Activated CD4-positive, alpha-beta T cell treated with anti-CD3 and anti-CD28 coated beads, Interleukin-2, amount 10 ng/mL, durations not matched to agents 24 days and 14 days (primary cell): ENCODE measurements at regions of chr6 and their contacts with region 1.

Region 1: GRCh38 chr6:683742-684440 is 9.0 kb downstream of the EXOC2 start:
- DNase-seq: peak; percentile 66
- H3K4me3 Mint-ChIP-seq: peak overlapping the region; percentile 71
- H3K27ac Mint-ChIP-seq: peak overlapping the region; percentile 77
- H3K4me1 Mint-ChIP-seq: peaks cover 41% of the 10 kb centered on the region
- H3K27me3 Mint-ChIP-seq: no peaks in the 10 kb centered on the region

Region 2: DNA sequence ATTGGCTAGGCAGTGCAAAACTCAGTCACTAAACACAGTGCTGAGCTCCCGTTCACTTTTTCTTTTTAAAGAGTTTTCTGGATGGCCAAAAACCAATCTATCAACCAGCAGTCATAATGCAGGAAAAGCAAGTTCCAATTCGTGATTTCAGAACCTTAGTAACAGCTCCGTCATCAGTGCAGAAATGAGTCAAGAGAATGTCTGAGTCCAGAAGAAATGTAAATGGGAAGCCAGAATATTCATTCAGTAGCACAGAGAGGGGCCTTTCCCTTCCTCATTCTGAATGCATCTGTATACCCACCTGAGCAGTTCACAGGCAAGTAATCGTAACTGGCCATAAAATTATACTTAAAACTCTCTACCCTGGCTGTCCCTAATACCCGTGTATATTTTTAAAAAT is 47.4 kb before region 1 on chr6:
- intact Hi-C with region 1: loop called (anchors 2 kb)
- DNase-seq: no peak
- H3K4me3 Mint-ChIP-seq: no peak overlapping the region
- H3K27ac Mint-ChIP-seq: no peak overlapping the region
- H3K4me1 Mint-ChIP-seq: peaks cover 7% of the 10 kb centered on the region
- H3K27me3 Mint-ChIP-seq: no peaks in the 10 kb centered on the region